K562 (cell line): ENCODE measurements at regions of chr1 and their contacts with region 1.

Region 1: GRCh38 chr1:51519048-51519864 is at the start of gene EPS15:
- DNase-seq: peak; percentile 94 to 96 (median 96)
- ATAC-seq: peak; percentile 73
- H3K4me3 ChIP-seq: peak within 1 kb of the TSS; percentile 59
- H3K27ac ChIP-seq: peak within 1 kb of the TSS; percentile 84
- H3K4me1 ChIP-seq: peaks cover 9 to 37% of the 10 kb centered on the region in 2 experiments
- H3K27me3 ChIP-seq: no peaks in the 10 kb centered on the region
- CTCF ChIP-seq: no peak
- EP300 ChIP-seq: peak; percentile 50; the same call in 1 of the 2 replicates
- POLR2A ChIP-seq: peak; percentile 76
- RAD21 ChIP-seq: peak; percentile 15 to 19; a peak in 1 of 4 replicates
- polyA plus RNA-seq, gene EPS15: 23.1 to 31.6 TPM

Region 2: GRCh38 chr1:50959913-50960844 is 559.1 kb before region 1 on chr1 and contains the start of gene FAF1:
- CTCF ChIA-PET with region 1: no interaction called
- POLR2A ChIA-PET with region 1: no interaction called
- in situ Hi-C with region 1: no loop called
- intact Hi-C with region 1: loop called (anchors 5 kb)
- DNase-seq: peak; percentile 94 to 100 (median 96)
- ATAC-seq: peak; percentile 88
- H3K4me3 ChIP-seq: peak within 1 kb of the TSS; percentile 62
- H3K27ac ChIP-seq: peak within 1 kb of the TSS; percentile 85
- H3K4me1 ChIP-seq: peaks cover 9 to 15% of the 10 kb centered on the region in 2 experiments; a peak in 4 of 5 replicates
- H3K27me3 ChIP-seq: no peaks in the 10 kb centered on the region
- CTCF ChIP-seq: peak; percentile 34 to 60 (median 56)
- EP300 ChIP-seq: peak; percentile 58
- POLR2A ChIP-seq: peak; percentile 94
- RAD21 ChIP-seq: peak in 1 of 2 experiments; percentile 20; a peak in 2 of 4 replicates
- polyA plus RNA-seq, gene FAF1: 48.7 to 60.9 TPM

Region 3: GRCh38 chr1:51235673-51236530 is 283.4 kb before region 1 on chr1 and contains the start of gene RNF11:
- CTCF ChIA-PET with region 1: no interaction called
- POLR2A ChIA-PET with region 1: no interaction called
- in situ Hi-C with region 1: no loop called
- intact Hi-C with region 1: loop called (anchors 5 kb)
- DNase-seq: peak; percentile 95 to 96 (median 96)
- ATAC-seq: peak; percentile 93
- H3K4me3 ChIP-seq: peak within 1 kb of the TSS; percentile 94
- H3K27ac ChIP-seq: peak within 1 kb of the TSS; percentile 89
- H3K4me1 ChIP-seq: peaks cover 19 to 21% of the 10 kb centered on the region in 2 experiments
- H3K27me3 ChIP-seq: no peaks in the 10 kb centered on the region
- CTCF ChIP-seq: no peak
- EP300 ChIP-seq: peak; percentile 56
- POLR2A ChIP-seq: peak; percentile 71
- RAD21 ChIP-seq: no peak; a peak in 1 of 4 replicates
- polyA plus RNA-seq, gene RNF11: 5.7 to 6.1 TPM

Region 4: GRCh38 chr1:51433269-51433971 is 85.8 kb before region 1 on chr1:
- CTCF ChIA-PET with region 1: no interaction called
- POLR2A ChIA-PET with region 1: no interaction called
- in situ Hi-C with region 1: no loop called
- intact Hi-C with region 1: loop called (anchors 2 kb)
- DNase-seq: peak in 2 of 4 experiments; percentile 20 to 37
- ATAC-seq: peak; percentile 4; the same call in 2 of the 3 replicates
- H3K4me3 ChIP-seq: no peak overlapping the region
- H3K27ac ChIP-seq: peak overlapping the region; percentile 73
- H3K4me1 ChIP-seq: peaks cover 13 to 35% of the 10 kb centered on the region in 2 experiments
- H3K27me3 ChIP-seq: no peaks in the 10 kb centered on the region
- CTCF ChIP-seq: no peak
- EP300 ChIP-seq: peak; percentile 33; the same call in 1 of the 2 replicates
- POLR2A ChIP-seq: no peak
- RAD21 ChIP-seq: no peak

Region 5: GRCh38 chr1:51469518-51469917 is 49.7 kb before region 1 on chr1:
- CTCF ChIA-PET with region 1: no interaction called
- POLR2A ChIA-PET with region 1: interaction called, 5 read pairs
- in situ Hi-C with region 1: no loop called
- intact Hi-C with region 1: loop called (anchors 5 kb)
- DNase-seq: peak in 2 of 4 experiments; percentile 21 to 35
- ATAC-seq: peak; percentile 83
- H3K4me3 ChIP-seq: no peak overlapping the region
- H3K27ac ChIP-seq: peak overlapping the region; percentile 27; the same call in 1 of the 3 replicates
- H3K4me1 ChIP-seq: peaks cover 0 to 11% of the 10 kb centered on the region in 2 experiments; a peak in 3 of 5 replicates
- H3K27me3 ChIP-seq: no peaks in the 10 kb centered on the region
- CTCF ChIP-seq: no peak
- EP300 ChIP-seq: no peak; the same call in 1 of the 2 replicates
- POLR2A ChIP-seq: no peak
- RAD21 ChIP-seq: no peak

Region 6: GRCh38 chr1:51558360-51558924 is 39.2 kb after region 1 on chr1:
- CTCF ChIA-PET with region 1: no interaction called
- POLR2A ChIA-PET with region 1: no interaction called
- in situ Hi-C with region 1: no loop called
- intact Hi-C with region 1: loop called (anchors 2 kb)
- DNase-seq: no peak
- ATAC-seq: no peak
- H3K4me3 ChIP-seq: no peak overlapping the region
- H3K27ac ChIP-seq: no peak overlapping the region
- H3K4me1 ChIP-seq: no peaks in the 10 kb centered on the region; a peak in 2 of 5 replicates
- H3K27me3 ChIP-seq: no peaks in the 10 kb centered on the region
- CTCF ChIP-seq: no peak
- EP300 ChIP-seq: no peak
- POLR2A ChIP-seq: no peak
- RAD21 ChIP-seq: no peak